ENCODE measurements at regions of chr13 and their contacts with region 1.

Region 1: DNA sequence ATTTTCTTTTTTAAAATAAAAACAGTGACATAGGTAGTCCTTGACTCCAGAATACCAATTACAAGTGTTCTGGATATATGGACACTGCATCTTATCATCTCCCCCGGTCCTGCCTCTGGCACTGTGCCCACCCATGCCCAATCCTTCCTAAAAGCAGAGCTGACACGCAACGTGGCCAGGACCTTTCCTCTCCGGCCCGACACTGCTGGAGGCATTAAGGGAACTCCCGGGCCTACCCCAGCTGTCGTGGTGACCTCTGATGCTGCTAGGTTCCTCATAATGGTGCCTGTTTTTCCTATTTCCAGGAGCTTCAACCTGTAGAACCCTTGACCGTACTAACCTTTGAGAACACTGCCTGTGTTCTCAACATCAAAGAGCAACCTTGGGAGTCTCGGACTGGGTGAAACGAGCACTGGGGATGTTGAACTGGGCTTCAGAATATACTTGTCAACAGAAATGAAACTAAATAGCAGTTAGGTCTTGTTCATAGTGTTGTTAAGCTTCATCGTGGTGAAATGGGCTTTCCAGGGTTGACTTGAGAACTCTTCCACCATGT is 13.9 kb upstream of the RNF113B start:
- DNase-seq: no peak
- H3K4me3 ChIP-seq: no peak overlapping the region
- H3K27ac ChIP-seq: no peak overlapping the region
- H3K4me1 ChIP-seq: peaks cover 31% of the 10 kb centered on the region
- H3K27me3 ChIP-seq: no peaks in the 10 kb centered on the region
- CTCF ChIP-seq: no peak

Region 2: GRCh38 chr13:98584668-98585391 is 393.9 kb after region 1 on chr13:
- CTCF ChIA-PET with region 1: no interaction called
- POLR2A ChIA-PET with region 1: interaction called, 11 read pairs
- intact Hi-C with region 1: no loop called
- DNase-seq: peak; percentile 58
- H3K4me3 ChIP-seq: no peak overlapping the region
- H3K27ac ChIP-seq: peak overlapping the region; percentile 49
- H3K4me1 ChIP-seq: peaks cover 42% of the 10 kb centered on the region
- H3K27me3 ChIP-seq: no peaks in the 10 kb centered on the region
- CTCF ChIP-seq: no peak